Activated naive CD4-positive, alpha-beta T cell treated with anti-CD3 and anti-CD28 coated beads for 36 hours (primary cell): ENCODE measurements at regions of chr13 and their contacts with region 1.

Region 1: GRCh38 chr13:24228852-24229458 is 68.4 kb downstream of the SPATA13 start:
- DNase-seq: peak; percentile 63
- H3K4me3 Mint-ChIP-seq: no peak overlapping the region
- H3K27ac Mint-ChIP-seq: no peak overlapping the region
- H3K4me1 Mint-ChIP-seq: peaks cover 34% of the 10 kb centered on the region
- H3K27me3 Mint-ChIP-seq: no peaks in the 10 kb centered on the region

Region 2: GRCh38 chr13:24020375-24020830 is 208.6 kb before region 1 on chr13:
- CTCF ChIA-PET with region 1: interaction called, 24 read pairs
- intact Hi-C with region 1: loop called (anchors 2 kb)
- DNase-seq: peak; percentile 67
- H3K4me3 Mint-ChIP-seq: no peak overlapping the region
- H3K27ac Mint-ChIP-seq: no peak overlapping the region
- H3K4me1 Mint-ChIP-seq: no peaks in the 10 kb centered on the region
- H3K27me3 Mint-ChIP-seq: no peaks in the 10 kb centered on the region

Region 3: GRCh38 chr13:24097064-24097463 is 131.9 kb before region 1 on chr13:
- CTCF ChIA-PET with region 1: interaction called, 6 read pairs
- intact Hi-C with region 1: loop called (anchors 1 kb)
- DNase-seq: peak; percentile 69
- H3K4me3 Mint-ChIP-seq: no peak overlapping the region
- H3K27ac Mint-ChIP-seq: peak overlapping the region; percentile 65
- H3K4me1 Mint-ChIP-seq: peaks cover 17% of the 10 kb centered on the region
- H3K27me3 Mint-ChIP-seq: peaks cover 6% of the 10 kb centered on the region

Region 4: GRCh38 chr13:24173795-24174194 is 55.2 kb before region 1 on chr13:
- CTCF ChIA-PET with region 1: no interaction called
- intact Hi-C with region 1: loop called (anchors 2 kb)
- DNase-seq: no peak
- H3K4me3 Mint-ChIP-seq: no peak overlapping the region
- H3K27ac Mint-ChIP-seq: peak overlapping the region; percentile 48
- H3K4me1 Mint-ChIP-seq: peaks cover 23% of the 10 kb centered on the region
- H3K27me3 Mint-ChIP-seq: no peaks in the 10 kb centered on the region

Region 5: DNA sequence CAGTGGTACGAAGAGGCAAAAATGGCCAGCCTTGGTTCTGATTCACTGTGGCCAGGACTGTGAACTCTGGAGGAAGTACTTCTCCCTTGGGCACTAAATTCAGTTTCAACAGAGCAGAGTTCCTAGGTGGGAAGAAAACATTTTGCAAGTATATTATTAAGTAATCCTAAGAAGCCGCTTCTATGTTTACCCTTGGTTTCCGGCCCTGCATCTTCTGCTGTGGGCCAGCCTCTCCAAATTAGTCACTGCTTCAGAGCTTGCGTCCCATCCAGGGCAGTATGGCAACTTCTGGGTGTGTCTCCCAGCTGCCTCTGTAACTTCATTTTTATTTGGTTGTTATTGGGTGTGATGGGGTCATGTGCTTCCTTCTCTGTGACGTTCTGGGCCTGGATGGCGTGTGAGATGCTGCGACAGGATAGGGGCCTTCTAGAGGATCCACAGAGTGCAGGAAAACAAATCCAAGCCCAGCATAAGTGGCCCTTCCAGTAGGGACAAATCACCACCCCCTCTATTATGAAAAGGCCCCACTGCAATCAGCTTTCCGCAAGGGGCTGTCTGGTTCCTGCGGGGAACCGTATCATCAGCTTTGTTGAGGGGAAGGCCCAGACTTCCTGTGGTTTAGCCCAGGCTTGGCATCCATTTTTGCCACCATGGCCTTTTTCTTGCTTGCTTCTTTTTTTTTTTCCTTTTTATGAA is 25.3 kb after region 1 on chr13:
- CTCF ChIA-PET with region 1: interaction called, 6 read pairs
- intact Hi-C with region 1: loop called (anchors 1 kb)
- DNase-seq: peak; percentile 79
- H3K4me3 Mint-ChIP-seq: peak overlapping the region; percentile 87
- H3K27ac Mint-ChIP-seq: peak overlapping the region; percentile 96
- H3K4me1 Mint-ChIP-seq: peaks cover 77% of the 10 kb centered on the region
- H3K27me3 Mint-ChIP-seq: no peaks in the 10 kb centered on the region

Region 6: DNA sequence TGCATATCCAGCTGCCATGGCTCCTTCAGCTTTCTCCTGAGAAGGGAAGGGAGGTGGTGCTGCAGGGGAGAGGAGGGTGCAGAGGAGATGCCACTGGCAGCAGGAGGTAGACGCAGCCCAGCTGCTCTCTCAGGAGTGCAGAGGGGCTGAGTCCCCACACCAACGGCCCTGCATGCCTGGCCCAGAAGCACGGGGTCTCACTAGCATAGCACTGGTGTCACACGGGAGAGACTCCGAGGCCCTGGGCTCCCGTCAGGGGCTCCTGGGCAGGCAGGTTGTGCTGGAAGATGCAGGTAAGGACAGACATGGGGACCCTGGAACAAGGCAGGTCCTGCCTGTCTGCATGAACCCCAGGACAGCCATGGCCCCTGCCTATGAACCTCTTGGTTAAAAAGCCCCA is 160.6 kb after region 1 on chr13:
- CTCF ChIA-PET with region 1: no interaction called
- intact Hi-C with region 1: no loop called
- DNase-seq: no peak
- H3K4me3 Mint-ChIP-seq: no peak overlapping the region
- H3K27ac Mint-ChIP-seq: no peak overlapping the region
- H3K4me1 Mint-ChIP-seq: no peaks in the 10 kb centered on the region
- H3K27me3 Mint-ChIP-seq: no peaks in the 10 kb centered on the region